ENCODE measurements at regions of chr9 and their contacts with region 1.

Region 1: GRCh38 chr9:21789541-21790037 is 12.8 kb upstream of the MTAP start:
- DNase-seq: peak; percentile 40
- H3K4me3 Mint-ChIP-seq: peak overlapping the region; percentile 38
- H3K27ac Mint-ChIP-seq: no peak overlapping the region
- H3K4me1 Mint-ChIP-seq: no peaks in the 10 kb centered on the region
- H3K27me3 Mint-ChIP-seq: peaks cover 38% of the 10 kb centered on the region

Region 2: DNA sequence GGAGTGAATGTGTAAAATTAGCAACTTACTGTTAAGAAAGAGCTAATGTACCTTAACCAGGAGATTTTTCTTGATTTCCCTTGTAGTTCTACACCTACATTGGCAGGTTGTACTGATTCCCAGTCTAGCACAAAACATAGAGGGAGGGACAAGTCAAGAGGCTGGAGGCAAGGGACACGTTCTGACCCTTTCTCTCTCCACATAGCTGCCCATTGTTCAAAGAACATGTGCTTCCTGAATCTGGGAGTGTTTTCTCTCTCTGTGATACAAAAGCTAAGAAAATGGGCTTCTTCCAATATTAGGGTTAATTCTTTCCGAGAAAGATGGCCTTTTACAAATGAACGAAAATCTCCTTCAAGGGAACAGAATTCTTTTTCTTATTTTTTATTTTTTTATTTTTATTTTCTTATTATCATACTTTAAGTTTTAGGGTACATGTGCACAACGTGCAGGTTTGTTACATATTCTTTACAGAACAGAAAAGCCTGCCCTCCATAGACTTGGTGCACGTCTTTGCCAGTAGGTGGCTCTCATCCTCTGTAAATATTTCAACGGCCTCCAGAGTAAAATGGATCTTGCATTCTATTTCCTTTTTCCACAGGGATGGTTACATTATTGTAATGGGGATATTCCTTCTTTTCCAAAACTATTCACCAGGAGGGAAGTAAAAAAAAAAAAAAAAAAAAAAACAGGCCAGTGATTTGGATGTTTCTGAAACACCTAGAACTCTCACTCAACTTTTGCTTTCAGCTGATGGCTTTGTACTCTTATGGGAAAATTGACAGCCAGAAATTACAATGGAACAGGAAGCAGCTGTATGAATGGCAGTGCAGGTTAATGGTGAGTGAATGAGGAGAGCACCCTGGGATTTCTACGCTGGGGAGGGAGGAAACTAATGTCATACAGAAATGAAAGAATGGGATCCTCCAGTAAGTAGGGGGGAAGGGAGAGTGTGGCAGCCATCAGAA is 471.3 kb before region 1 on chr9:
- intact Hi-C with region 1: loop called (anchors 1 kb)
- DNase-seq: no peak
- H3K4me3 Mint-ChIP-seq: no peak overlapping the region
- H3K27ac Mint-ChIP-seq: no peak overlapping the region
- H3K4me1 Mint-ChIP-seq: peaks cover 4% of the 10 kb centered on the region
- H3K27me3 Mint-ChIP-seq: peaks cover 22% of the 10 kb centered on the region

Region 3: DNA sequence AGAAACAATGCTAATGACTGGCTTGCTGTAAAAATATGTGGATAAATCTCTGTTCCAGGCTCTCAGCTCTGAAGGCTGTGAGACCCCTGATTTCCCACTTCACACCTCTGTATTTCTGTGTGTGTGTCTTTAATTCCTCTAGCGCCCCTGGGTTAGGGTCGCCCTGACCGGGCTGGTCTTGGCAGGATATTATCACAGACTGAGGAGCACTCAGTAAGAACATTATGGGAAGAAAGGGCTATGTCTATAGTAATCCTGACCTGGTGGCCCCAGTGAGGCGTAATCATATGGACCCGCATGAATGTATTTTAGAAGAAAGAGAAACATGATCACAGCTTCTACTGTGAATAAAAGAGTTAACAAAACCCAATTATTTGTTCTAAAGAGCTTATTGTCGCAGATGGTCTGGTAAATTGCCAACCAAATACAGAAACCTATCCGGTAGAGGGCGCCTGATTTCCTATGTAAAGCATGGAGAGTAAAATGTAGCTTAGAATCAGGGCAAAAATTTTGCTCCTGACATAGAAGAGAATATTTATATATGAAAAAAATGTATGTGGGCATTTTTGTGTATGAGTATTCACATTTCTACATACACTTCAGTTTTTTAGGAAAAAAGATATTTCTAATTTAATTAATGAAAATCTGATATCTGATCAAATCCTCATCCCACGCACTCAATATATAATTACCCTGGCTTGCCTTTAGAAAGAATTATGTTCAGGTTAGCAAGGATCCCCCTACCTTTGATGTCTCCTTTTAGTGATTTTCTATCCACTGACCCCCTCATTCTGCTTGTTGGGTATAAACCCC is 355.2 kb before region 1 on chr9:
- intact Hi-C with region 1: loop called (anchors 1 kb)
- DNase-seq: no peak
- H3K4me3 Mint-ChIP-seq: no peak overlapping the region
- H3K27ac Mint-ChIP-seq: no peak overlapping the region
- H3K4me1 Mint-ChIP-seq: no peaks in the 10 kb centered on the region
- H3K27me3 Mint-ChIP-seq: peaks cover 43% of the 10 kb centered on the region

Region 4: DNA sequence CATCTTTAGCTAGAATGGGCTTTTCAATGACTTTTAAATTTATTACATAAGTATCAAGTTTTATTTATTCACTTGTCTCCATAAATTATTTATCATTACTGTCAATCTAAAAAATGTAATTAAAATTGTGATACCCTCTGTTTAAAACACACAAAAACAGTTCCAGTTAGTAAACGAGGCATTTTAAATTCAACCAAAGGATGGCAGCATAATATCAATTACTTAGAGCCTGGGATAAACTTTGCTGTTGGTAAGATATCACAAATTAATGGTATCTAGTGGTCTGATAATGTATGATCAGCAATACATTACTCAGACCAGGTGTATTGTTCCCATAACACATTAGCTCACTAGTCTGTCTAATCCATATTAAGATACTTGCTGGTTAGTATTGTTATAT is 297.8 kb before region 1 on chr9:
- intact Hi-C with region 1: loop called (anchors 1 kb)
- DNase-seq: no peak
- H3K4me3 Mint-ChIP-seq: no peak overlapping the region
- H3K27ac Mint-ChIP-seq: no peak overlapping the region
- H3K4me1 Mint-ChIP-seq: no peaks in the 10 kb centered on the region
- H3K27me3 Mint-ChIP-seq: no peaks in the 10 kb centered on the region

Region 5: DNA sequence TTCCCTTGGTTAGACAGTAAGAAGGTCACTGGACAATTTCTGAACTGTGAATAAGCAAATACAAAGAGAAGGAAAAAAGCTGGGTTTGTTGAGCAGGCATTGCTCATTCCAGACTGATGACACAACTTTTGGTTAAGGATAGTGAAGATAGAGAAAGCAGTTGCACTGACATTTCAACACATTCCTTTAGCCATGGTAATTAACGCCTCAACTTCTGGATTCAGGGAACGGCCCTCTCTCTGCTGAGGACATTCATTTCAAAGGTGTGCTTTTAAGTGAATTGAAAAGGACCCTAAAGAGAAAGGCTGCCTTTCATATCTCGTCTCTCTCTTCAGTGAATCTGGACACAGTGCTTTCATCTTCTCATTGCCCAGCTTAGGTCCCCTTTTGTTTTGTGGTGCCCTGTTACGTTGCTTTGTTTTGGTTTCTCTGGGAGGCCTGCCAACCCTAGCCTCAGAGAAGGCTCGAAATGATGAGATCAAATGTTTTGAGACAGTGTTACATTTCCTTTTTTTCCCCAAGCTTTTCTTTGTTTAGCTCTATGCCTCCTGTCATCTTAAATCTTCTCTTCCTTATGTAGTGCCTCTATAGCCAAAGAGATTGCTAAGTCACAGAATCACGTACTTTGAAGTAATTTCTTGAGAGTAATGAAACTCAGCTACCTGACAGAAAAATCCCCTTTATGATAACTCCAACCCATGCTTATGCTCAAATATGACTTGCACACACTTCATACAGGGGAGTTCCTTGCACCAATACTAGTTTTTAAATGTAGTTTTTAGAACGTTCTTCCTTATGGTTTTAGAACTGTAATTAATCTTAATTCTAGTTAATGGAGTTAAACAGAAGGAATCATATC is 213.0 kb before region 1 on chr9:
- intact Hi-C with region 1: loop called (anchors 5 kb)
- DNase-seq: no peak
- H3K4me3 Mint-ChIP-seq: peak overlapping the region; percentile 4
- H3K27ac Mint-ChIP-seq: no peak overlapping the region
- H3K4me1 Mint-ChIP-seq: peaks cover 36% of the 10 kb centered on the region
- H3K27me3 Mint-ChIP-seq: peaks cover 33% of the 10 kb centered on the region

Region 6: DNA sequence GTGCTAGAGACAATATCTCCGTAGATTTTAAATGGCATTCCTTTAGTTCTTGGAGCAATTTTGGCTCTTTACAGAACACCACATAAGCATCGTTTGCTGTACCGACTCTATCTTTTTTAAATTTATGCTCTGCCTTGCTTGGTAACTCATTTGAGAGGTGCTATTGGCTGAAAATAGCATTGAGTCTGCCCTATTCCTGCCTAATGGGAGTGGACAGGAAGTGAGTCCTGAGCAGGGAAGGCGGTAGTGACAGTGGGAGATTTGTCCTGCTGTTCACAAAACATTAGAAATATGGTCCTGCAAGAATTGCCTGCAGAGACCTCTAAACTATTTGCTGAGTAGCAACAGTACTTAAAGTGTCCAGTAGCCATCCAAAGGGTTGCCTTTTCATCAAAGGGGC is 192.3 kb before region 1 on chr9:
- intact Hi-C with region 1: no loop called
- DNase-seq: no peak
- H3K4me3 Mint-ChIP-seq: no peak overlapping the region
- H3K27ac Mint-ChIP-seq: no peak overlapping the region
- H3K4me1 Mint-ChIP-seq: peaks cover 1% of the 10 kb centered on the region
- H3K27me3 Mint-ChIP-seq: peaks cover 15% of the 10 kb centered on the region

Region 7: DNA sequence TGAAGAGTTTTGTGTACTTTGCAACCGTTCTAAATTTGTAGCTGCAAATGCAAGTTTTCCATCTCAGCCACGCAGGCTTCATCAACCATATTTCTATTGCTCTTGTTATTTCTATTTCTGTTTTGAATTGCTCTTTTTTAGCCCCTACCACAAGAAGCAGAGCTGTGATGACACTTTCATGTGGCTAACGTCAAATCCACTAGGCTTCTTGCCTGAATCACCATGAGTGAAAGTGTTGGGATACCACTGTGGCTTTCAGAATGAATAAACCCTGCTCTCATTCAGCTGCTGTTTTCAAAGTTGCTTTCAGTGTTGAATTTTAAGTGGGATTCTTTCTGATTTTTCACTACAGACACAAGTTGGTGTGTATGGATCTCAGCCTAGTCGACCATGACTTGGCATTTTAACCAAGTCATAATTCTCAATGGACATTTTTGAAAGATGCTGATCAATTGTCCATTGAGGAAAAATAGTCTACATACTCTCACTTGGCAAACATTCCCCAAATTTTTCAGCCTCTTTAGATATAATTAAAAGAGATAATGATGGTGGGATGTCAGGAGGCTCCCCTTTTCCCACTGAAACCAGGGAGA is 28.2 kb before region 1 on chr9:
- intact Hi-C with region 1: loop called (anchors 1 kb)
- DNase-seq: peak; percentile 46
- H3K4me3 Mint-ChIP-seq: no peak overlapping the region
- H3K27ac Mint-ChIP-seq: peak overlapping the region; percentile 18
- H3K4me1 Mint-ChIP-seq: peaks cover 9% of the 10 kb centered on the region
- H3K27me3 Mint-ChIP-seq: peaks cover 78% of the 10 kb centered on the region

Measured in activated T-helper 1 cell treated with anti-CD3 and anti-CD28 coated beads, Interleukin-12 subunit alpha, Interleukin-12 subunit beta, Interleukin-2, Interleukin-4 antibody, amounts not matched to agents 30 ng/mL and 10 ng/mL and 1 ng/mL, durations not matched to agents 14 hours and 24 hours and 36 hours (primary cell).